ENCODE measurements at regions of chr1 and their contacts with region 1.

Region 1: GRCh38 chr1:164928232-164928812 is 369.3 kb downstream of the PBX1 start:
- DNase-seq: no peak
- H3K4me3 ChIP-seq: no peak overlapping the region
- H3K4me3 Mint-ChIP-seq: no peak overlapping the region
- H3K27ac Mint-ChIP-seq: no peak overlapping the region
- H3K4me1 ChIP-seq: no peaks in the 10 kb centered on the region
- H3K4me1 Mint-ChIP-seq: no peaks in the 10 kb centered on the region
- H3K27me3 ChIP-seq: no peaks in the 10 kb centered on the region; the same call in 1 of the 2 replicates
- H3K27me3 Mint-ChIP-seq: peaks cover 6% of the 10 kb centered on the region
- CTCF ChIP-seq: no peak

Region 2: GRCh38 chr1:164891612-164892011 is 36.7 kb before region 1 on chr1:
- CTCF ChIA-PET with region 1: no interaction called
- POLR2A ChIA-PET with region 1: no interaction called
- intact Hi-C with region 1: loop called (anchors 2 kb)
- DNase-seq: peak in 1 of 2 experiments; percentile 28
- H3K4me3 ChIP-seq: no peak overlapping the region
- H3K4me3 Mint-ChIP-seq: no peak overlapping the region
- H3K27ac Mint-ChIP-seq: no peak overlapping the region
- H3K4me1 ChIP-seq: peaks cover 3% of the 10 kb centered on the region; the same call in 1 of the 2 replicates
- H3K4me1 Mint-ChIP-seq: peaks cover under 1% of the 10 kb centered on the region
- H3K27me3 ChIP-seq: no peaks in the 10 kb centered on the region
- H3K27me3 Mint-ChIP-seq: peaks cover 10% of the 10 kb centered on the region
- CTCF ChIP-seq: peak in 1 of 2 experiments; percentile 8